ENCODE measurements at regions of chr10 and their contacts with region 1.

Region 1: DNA sequence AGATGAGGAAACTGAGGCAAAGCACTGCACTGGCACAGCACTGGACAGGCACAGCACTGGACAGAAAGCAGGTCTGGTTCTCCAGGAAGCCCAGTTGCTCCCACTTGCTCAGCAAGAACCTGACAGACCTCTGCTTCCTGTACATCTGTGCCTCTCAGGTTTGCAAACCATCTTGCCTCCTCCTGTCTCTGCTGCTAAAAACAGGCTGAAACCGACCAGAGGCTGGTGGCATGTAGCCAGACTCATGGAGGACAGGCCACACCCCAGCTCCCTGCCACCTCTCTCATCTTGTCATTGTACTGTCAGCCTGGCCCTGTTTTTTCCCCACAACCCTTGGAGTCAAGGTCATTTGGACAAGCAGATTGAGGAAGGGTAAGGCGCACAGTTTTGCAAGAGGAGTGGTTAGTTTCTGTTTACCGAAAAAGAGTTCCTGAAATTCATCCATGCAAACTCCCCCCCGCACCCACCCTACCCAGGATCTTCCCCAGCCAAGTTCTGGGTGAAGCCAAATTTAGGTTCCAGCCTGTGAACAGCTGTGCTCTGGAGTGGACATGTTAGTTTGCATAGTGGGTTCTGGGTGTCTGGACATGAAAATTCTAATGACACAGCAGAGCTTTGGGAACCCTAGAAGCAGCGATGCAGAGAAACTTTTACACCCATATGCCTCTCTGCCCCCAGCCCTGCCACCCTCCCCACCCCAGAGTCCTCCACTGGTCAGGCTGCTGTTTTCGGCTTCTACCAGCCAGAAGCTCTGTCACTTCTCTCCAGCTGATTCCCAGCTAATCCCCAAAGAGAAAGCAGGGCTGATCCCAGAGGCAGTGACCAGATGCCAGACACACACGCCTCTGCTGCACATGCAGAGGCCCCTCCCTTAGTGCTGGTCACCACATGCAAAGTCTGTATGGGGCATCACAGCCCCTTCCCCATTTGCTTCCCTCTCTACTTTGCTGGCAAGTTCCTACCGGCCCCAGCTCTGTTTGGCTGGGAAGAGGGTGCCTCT is 8.5 kb upstream of the C10orf105 start:
- DNase-seq: peak; percentile 91

Region 2: DNA sequence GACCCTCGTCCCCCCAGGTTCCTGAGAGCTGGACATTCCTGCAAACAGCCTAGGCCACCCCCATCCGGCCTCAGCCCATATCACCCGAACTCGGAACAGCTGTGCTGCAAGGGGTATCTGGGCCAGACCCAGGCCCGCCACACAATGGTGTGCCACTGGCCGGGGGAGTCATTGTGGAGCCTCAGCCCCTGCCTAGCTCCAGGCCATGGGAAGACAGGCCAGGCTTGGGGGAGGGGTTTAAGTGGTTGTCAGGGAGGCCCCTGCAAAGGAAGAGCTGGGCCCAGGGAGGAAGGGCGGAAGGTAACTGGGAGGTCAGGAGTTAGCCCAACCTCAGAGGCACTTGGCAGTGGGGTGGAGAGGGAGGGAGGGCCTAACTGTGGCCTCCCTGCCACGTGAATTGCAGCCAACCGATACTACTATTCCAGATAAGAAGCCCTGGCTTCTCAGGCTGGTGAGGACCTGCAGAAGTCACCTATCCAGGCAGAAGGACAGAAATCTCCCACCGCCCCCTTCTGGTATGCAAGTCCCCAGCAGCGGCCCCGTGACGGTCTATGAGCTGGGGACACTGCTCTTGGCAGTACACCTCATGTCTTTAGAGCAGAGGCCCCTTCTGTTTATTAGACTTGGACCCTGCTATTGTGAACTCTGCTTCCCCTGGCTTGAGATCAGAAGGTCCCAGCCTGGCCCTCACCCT is 18.5 kb after region 1 on chr10:
- intact Hi-C with region 1: loop called (anchors 1 kb)
- DNase-seq: peak; percentile 86

Measured in cardiac septum (tissue), 1 donor.